H1 (cell line): ENCODE measurements at regions of chr9 and their contacts with region 1.

Region 1: GRCh38 chr9:124352616-124353015 is 62.6 kb downstream of the PSMB7 start:
- DNase-seq: no peak
- H3K4me3 ChIP-seq: no peak overlapping the region
- H3K27ac ChIP-seq: no peak overlapping the region
- H3K4me1 ChIP-seq: peaks cover 0 to 4% (median 0%) of the 10 kb centered on the region in 4 experiments; a peak in 1 of 7 replicates
- H3K27me3 ChIP-seq: no peaks in the 10 kb centered on the region
- CTCF ChIP-seq: no peak
- EP300 ChIP-seq: no peak
- POLR2A ChIP-seq: no peak
- RAD21 ChIP-seq: no peak

Region 2: GRCh38 chr9:124320062-124320973 is 32.3 kb before region 1 on chr9:
- CTCF ChIA-PET with region 1: interaction called, 12 read pairs
- POLR2A ChIA-PET with region 1: no interaction called
- DNase-seq: peak; percentile 47 to 93
- H3K4me3 ChIP-seq: no peak overlapping the region
- H3K27ac ChIP-seq: no peak overlapping the region
- H3K4me1 ChIP-seq: peaks cover 0 to 1% (median 0%) of the 10 kb centered on the region in 4 experiments; a peak in 1 of 7 replicates
- H3K27me3 ChIP-seq: no peaks in the 10 kb centered on the region
- CTCF ChIP-seq: peak in 2 of 3 experiments; percentile 81 to 96; a peak in 3 of 4 replicates
- EP300 ChIP-seq: no peak
- POLR2A ChIP-seq: no peak
- RAD21 ChIP-seq: peak; percentile 62 to 74

Region 3: GRCh38 chr9:124340219-124341069 is 12.2 kb before region 1 on chr9:
- CTCF ChIA-PET with region 1: interaction called, 4 read pairs
- POLR2A ChIA-PET with region 1: interaction called, 15 read pairs
- DNase-seq: no peak
- H3K4me3 ChIP-seq: no peak overlapping the region
- H3K27ac ChIP-seq: no peak overlapping the region; the same call in none of the 2 replicates
- H3K4me1 ChIP-seq: peaks cover 0 to 22% (median 12%) of the 10 kb centered on the region in 4 experiments; a peak in 5 of 7 replicates
- H3K27me3 ChIP-seq: no peaks in the 10 kb centered on the region
- CTCF ChIP-seq: no peak
- EP300 ChIP-seq: no peak
- POLR2A ChIP-seq: no peak
- RAD21 ChIP-seq: no peak